MCF 10A (cell line): ENCODE measurements at regions of chr14 and their contacts with region 1.

Region 1: DNA sequence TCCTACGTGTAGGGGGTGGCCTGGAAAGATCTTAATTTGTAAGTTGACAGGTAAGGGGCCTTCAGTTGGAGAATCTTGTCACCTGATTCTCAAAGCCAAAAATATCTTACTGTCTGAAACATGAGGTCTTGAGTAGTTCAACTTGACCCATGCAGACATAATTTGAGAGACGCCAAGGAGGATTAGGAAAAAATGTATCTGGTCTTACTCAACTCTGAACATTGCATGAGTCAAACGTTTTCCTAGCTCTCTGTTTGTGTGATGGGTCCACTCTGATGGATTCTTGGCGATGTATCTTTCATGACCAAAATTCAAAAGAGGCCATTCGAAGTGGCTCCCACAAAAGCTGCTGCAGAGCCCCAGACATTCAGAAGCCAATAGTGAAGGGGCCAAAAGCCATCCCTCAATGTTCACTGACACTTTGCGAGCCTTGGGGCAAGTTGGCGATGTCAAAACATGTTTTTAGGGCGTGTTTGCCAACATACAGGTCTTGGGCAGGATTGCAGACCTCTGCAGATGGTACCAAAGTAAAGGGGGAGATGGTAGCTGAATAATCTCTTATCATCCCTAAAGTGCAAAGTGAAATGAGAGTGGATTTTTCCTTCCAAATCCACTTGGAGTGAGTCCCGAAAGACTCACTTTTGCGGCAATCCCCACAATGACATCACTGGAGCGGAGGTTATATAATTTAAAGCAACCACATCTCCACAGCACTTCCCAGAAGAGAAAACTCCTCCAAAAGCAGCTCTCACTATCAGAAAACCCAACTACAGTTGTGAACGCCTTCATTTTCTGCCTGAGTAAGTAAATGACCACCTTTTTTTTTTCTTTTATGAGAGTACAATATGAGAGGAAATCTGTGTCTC is at the start of gene BDKRB1:
- DNase-seq: peak; percentile 86
- H3K4me3 Mint-ChIP-seq: peak within 1 kb of the TSS; percentile 39
- H3K27ac Mint-ChIP-seq: peak within 1 kb of the TSS; percentile 39
- H3K4me1 Mint-ChIP-seq: peaks cover 36% of the 10 kb centered on the region
- H3K27me3 Mint-ChIP-seq: no peaks in the 10 kb centered on the region
- CTCF ChIP-seq: no peak
- total RNA-seq, gene BDKRB1: 0.32 and 0.51 TPM in 2 replicates

Region 2: GRCh38 chr14:96215452-96216244 is 40.1 kb before region 1 on chr14:
- CTCF ChIA-PET with region 1: no interaction called
- POLR2A ChIA-PET with region 1: interaction called, 14 read pairs
- intact Hi-C with region 1: no loop called
- DNase-seq: peak; percentile 68
- H3K4me3 Mint-ChIP-seq: no peak overlapping the region
- H3K27ac Mint-ChIP-seq: peak overlapping the region; percentile 19
- H3K4me1 Mint-ChIP-seq: peaks cover 19% of the 10 kb centered on the region
- H3K27me3 Mint-ChIP-seq: no peaks in the 10 kb centered on the region
- CTCF ChIP-seq: no peak

Region 3: DNA sequence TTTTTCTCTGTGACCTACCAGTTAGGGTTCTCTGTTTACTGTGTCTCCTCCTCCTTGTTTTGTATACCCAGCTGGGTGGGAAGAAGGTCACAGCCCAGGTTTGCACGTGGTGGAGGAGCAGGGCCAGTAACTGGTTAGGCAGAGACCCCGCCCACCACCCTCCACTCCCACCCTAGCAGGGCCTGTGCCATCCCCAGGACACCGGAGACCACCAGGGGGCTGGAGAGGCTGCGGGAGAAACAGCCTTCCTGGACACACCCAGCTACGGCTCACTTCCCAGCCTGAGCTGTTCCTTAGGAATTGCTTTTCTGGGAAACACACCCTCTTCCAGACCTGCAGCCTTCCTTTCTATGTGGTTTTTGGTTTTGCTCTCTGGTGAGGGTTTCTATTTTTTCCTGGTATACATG is 30.0 kb before region 1 on chr14:
- CTCF ChIA-PET with region 1: interaction called, 3 read pairs
- POLR2A ChIA-PET with region 1: interaction called, 11 read pairs
- intact Hi-C with region 1: no loop called
- DNase-seq: peak; percentile 42
- H3K4me3 Mint-ChIP-seq: no peak overlapping the region
- H3K27ac Mint-ChIP-seq: no peak overlapping the region
- H3K4me1 Mint-ChIP-seq: peaks cover 26% of the 10 kb centered on the region
- H3K27me3 Mint-ChIP-seq: no peaks in the 10 kb centered on the region
- CTCF ChIP-seq: no peak

Region 4: DNA sequence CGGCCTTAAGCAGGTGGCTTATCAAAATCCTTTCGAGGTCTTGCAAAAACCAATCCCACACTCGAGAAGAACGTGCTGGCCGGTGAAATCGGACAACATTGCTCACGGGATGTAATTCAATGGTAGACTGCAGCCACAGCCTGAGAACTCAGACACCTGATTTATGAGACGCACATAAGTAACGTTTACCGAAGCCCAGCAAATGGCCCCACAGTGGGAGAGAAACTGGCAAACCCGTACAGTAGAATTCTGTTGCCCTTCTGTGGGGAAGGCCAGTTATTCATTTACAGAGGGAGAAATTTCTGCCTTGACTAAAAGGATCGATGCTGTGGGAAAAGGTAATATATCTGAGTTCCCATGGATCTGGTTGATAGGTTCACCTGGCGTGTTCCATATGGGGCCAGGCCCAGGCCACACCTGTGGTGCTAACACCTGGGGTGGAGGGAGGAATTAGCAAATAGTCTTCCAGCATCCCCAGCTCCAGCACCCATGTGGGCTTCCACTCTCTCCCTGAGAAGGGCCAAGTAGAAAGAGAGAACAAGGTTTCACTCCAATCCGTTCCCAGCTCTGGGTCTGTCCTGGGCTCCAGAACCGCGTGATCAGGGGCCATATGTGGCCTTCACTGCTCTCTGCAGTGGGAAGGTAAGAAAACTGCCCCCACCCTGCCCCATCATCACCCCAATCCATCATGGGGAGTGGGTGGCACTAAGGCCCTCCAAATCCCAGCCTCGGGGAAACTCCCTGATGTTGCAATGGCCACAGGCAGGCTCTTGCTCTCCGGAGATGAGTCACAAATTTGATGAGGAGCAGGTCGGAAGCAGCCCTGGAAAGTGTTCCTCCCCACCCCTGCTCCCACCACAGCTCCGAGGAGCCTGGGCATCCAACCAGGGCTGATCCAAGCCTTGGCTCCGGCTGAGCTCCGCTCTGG is 13.0 kb after region 1 on chr14:
- CTCF ChIA-PET with region 1: interaction called, 6 read pairs
- POLR2A ChIA-PET with region 1: interaction called, 21 read pairs
- intact Hi-C with region 1: loop called (anchors 1 kb)
- DNase-seq: peak; percentile 98
- H3K4me3 Mint-ChIP-seq: peak overlapping the region; percentile 43
- H3K27ac Mint-ChIP-seq: peak overlapping the region; percentile 78
- H3K4me1 Mint-ChIP-seq: peaks cover 45% of the 10 kb centered on the region
- H3K27me3 Mint-ChIP-seq: no peaks in the 10 kb centered on the region
- CTCF ChIP-seq: no peak